Transverse colon (tissue), 4 donors: ENCODE measurements at regions of chr6 and their contacts with region 1.

Region 1: DNA sequence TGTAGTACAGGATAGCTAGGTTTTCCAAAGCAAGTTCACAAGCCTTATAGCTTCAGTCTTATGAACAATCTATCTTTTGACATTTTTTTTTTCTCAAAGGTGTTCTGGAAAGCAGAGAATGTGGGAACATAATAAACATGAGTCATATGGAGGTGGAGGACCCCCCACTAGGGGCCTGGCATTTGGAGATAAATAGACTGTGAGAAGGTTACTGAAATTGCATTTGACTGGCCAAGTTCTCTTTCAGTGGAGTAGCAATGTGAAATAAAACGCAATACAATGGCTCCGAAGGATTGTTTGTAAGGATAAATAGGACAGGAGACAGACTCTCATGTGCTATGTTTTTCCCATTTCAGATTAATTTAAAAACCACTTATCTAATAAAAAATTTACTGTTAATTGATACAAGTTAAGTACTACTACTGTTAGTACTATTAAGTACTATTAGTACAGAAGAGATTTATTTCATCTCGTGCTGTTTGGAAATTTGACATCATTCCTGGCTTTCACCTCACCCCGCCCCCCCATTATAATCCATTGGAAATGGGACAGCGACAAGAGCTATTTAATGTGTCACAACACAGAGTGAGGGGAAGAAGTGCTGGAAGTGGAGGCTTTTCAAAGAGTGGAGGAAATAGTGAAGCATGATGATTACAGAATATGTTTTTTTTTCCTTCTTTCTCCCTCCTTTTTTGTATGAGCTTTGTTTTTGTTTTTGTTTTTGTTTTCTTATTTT is 122.6 kb upstream of the ID4 start:
- DNase-seq: no peak
- H3K4me3 ChIP-seq: no peak overlapping the region
- H3K27ac ChIP-seq: no peak overlapping the region
- H3K4me1 ChIP-seq: no peaks in the 10 kb centered on the region
- H3K27me3 ChIP-seq: no peaks in the 10 kb centered on the region
- CTCF ChIP-seq: no peak
- EP300 ChIP-seq: no peak
- POLR2A ChIP-seq: no peak

Region 2: DNA sequence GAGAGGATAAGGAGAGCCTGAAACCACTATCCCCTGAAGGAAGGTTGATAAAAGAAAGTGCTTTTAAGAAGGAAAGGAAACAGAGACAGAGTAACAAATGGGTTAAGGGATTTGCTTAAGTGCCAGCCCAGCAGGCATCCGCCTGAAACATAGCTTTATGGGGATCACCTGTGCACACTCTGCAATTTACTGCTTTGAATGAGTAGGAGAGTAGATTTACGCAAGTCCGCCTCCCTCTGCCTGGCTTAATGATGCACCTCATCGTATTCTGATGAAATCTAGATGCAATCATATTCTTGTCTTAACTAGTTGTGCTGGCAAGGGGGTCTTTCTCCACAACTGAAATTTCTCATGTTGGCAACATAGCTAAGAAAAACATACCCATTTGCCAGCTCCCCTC is 21.5 kb after region 1 on chr6:
- in situ Hi-C with region 1: no loop called
- intact Hi-C with region 1: loop called (anchors 1 kb)
- DNase-seq: no peak
- H3K4me3 ChIP-seq: no peak overlapping the region
- H3K27ac ChIP-seq: no peak overlapping the region
- H3K4me1 ChIP-seq: no peaks in the 10 kb centered on the region
- H3K27me3 ChIP-seq: no peaks in the 10 kb centered on the region
- CTCF ChIP-seq: no peak
- EP300 ChIP-seq: no peak
- POLR2A ChIP-seq: no peak

Region 3: DNA sequence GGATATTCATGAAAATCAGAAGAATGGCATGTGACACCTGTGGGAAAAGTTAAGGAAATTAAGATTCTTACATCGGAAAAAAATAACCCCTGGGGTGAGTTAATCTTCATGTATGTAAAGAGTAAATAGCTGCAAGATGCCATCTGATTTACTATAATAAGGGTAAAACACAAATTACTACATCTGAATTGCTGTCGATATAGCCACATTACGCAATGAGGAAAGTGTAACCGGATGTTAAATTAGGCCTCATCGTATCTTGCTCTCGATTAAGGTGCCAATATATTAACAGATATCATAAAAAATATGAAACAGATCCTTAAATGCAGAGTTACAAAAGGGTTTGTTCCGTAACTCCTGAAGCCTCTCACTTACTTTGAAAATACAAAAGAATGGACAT is 35.1 kb after region 1 on chr6:
- in situ Hi-C with region 1: no loop called
- intact Hi-C with region 1: no loop called
- DNase-seq: no peak
- H3K4me3 ChIP-seq: no peak overlapping the region
- H3K27ac ChIP-seq: no peak overlapping the region
- H3K4me1 ChIP-seq: no peaks in the 10 kb centered on the region
- H3K27me3 ChIP-seq: no peaks in the 10 kb centered on the region
- CTCF ChIP-seq: no peak
- EP300 ChIP-seq: no peak
- POLR2A ChIP-seq: no peak

Region 4: GRCh38 chr6:19836799-19837510 is 122.4 kb after region 1 on chr6 and contains the start of gene ID4:
- in situ Hi-C with region 1: no loop called
- intact Hi-C with region 1: no loop called
- DNase-seq: peak; percentile 90
- H3K4me3 ChIP-seq: peak within 1 kb of the TSS; percentile 48 to 69 (median 60)
- H3K27ac ChIP-seq: peak within 1 kb of the TSS; percentile 84 to 90 (median 87)
- H3K4me1 ChIP-seq: peaks cover 0 to 15% (median 3%) of the 10 kb centered on the region in 4 donors
- H3K27me3 ChIP-seq: peaks cover 51% of the 10 kb centered on the region
- CTCF ChIP-seq: no peak
- EP300 ChIP-seq: no peak
- POLR2A ChIP-seq: peak; percentile 90
- total RNA-seq, gene ID4: 5.7 to 54.7 (median 9.7) TPM